PC-3 (cell line): ENCODE measurements at regions of chr2 and their contacts with region 1.

Region 1: DNA sequence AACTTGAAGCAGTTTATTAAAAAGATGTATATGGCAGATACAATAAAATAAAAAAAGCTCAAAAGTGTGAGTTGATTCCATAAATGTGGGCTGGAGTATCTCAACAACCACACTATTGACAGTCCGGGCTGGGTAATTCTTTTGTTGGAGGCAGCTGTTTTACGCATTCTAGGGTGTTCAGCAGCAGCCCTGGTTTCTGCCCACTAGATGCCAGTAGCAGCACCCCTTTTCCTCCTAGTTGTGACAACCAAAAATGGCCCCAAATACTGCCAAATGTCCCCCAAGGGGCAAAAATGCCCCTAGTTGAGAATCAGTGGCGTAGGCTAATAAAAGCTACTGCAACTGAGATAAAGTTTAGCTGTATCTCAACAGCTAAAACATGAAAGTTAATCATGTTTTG is 44.8 kb downstream of the CHMP3 start:
- DNase-seq: peak; percentile 10
- ATAC-seq: peak; percentile 50
- H3K4me3 ChIP-seq: no peak overlapping the region
- H3K27ac ChIP-seq: no peak overlapping the region
- H3K4me1 ChIP-seq: peaks cover 17% of the 10 kb centered on the region
- H3K27me3 ChIP-seq: no peaks in the 10 kb centered on the region
- CTCF ChIP-seq: peak; percentile 56

Region 2: GRCh38 chr2:86140969-86141392 is 377.5 kb before region 1 on chr2:
- CTCF ChIA-PET with region 1: no interaction called
- POLR2A ChIA-PET with region 1: no interaction called
- intact Hi-C with region 1: no loop called
- DNase-seq: no peak
- ATAC-seq: no peak
- H3K4me3 ChIP-seq: no peak overlapping the region
- H3K27ac ChIP-seq: no peak overlapping the region
- H3K4me1 ChIP-seq: no peaks in the 10 kb centered on the region
- H3K27me3 ChIP-seq: no peaks in the 10 kb centered on the region
- CTCF ChIP-seq: no peak

Region 3: GRCh38 chr2:86480105-86480504 is 38.4 kb before region 1 on chr2:
- CTCF ChIA-PET with region 1: no interaction called
- POLR2A ChIA-PET with region 1: interaction called, 10 read pairs
- intact Hi-C with region 1: no loop called
- DNase-seq: no peak
- ATAC-seq: no peak
- H3K4me3 ChIP-seq: no peak overlapping the region
- H3K27ac ChIP-seq: no peak overlapping the region
- H3K4me1 ChIP-seq: peaks cover 17% of the 10 kb centered on the region
- H3K27me3 ChIP-seq: no peaks in the 10 kb centered on the region
- CTCF ChIP-seq: no peak

Region 4: GRCh38 chr2:86562922-86563649 is 44.6 kb after region 1 on chr2 and contains the start of gene CHMP3:
- CTCF ChIA-PET with region 1: no interaction called
- POLR2A ChIA-PET with region 1: no interaction called
- intact Hi-C with region 1: loop called (anchors 5 kb)
- DNase-seq: peak; percentile 98
- ATAC-seq: peak; percentile 84
- H3K4me3 ChIP-seq: peak within 1 kb of the TSS; percentile 89
- H3K27ac ChIP-seq: peak within 1 kb of the TSS; percentile 93
- H3K4me1 ChIP-seq: peaks cover 23% of the 10 kb centered on the region
- H3K27me3 ChIP-seq: no peaks in the 10 kb centered on the region
- CTCF ChIP-seq: no peak
- total RNA-seq, gene CHMP3: 54.4 and 96.1 TPM in 2 replicates